ENCODE measurements at regions of chr3 and their contacts with region 1.

Region 1: GRCh38 chr3:115147329-115148141 is 447 bp upstream of the ZBTB20 start:
- DNase-seq: peak; percentile 92 to 100 (median 96)
- ATAC-seq: peak; percentile 71
- H3K4me3 ChIP-seq: peak overlapping the region; percentile 80 to 85
- H3K4me3 Mint-ChIP-seq: peak overlapping the region; percentile 88
- H3K27ac ChIP-seq: peak overlapping the region; percentile 96 to 97
- H3K27ac Mint-ChIP-seq: peak overlapping the region; percentile 100
- H3K4me1 ChIP-seq: peaks cover 15% of the 10 kb centered on the region
- H3K4me1 Mint-ChIP-seq: peaks cover 39% of the 10 kb centered on the region
- H3K27me3 ChIP-seq: no peaks in the 10 kb centered on the region
- H3K27me3 Mint-ChIP-seq: no peaks in the 10 kb centered on the region
- CTCF ChIP-seq: no peak

Region 2: DNA sequence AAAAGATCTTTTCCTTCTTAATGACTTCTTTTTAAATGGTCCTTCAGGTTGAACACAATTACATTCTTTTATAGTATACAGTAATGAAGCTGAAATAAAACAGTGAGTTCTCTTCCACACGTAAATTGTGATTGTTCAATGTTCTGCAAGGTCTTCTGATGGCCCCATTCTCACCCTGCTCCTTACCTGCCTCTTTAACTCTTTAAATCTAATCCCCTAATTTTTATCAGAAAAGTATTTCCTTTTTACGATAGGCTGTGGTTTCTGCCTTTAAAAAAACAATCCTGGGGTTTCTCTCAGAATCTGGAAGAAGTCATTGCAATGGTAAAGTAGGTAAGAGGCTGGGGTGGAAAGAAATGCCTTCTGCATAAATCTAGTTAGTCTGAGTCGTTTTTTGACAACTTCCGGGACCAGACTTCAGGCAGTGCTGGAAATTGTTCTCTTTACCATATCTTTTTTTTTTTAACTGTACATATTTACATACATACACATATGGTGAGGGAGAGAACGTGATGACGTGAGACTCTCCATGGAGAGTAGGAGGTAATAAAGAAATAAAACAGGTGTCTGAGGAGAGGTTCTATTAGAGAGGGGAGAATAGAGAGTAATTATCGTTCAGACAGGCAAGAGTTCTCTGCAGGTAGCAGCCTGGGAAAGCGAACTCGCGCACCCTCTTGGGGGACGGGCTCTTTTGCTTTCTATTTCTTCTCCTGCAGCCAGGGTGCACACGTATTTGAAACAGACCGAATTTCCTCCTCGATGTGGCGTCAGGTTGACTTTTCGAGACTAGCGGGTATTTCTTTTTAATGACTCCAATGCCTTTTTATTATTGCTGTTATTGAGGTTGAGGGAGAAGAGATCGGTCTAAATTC is 1615.5 kb before region 1 on chr3 and contains the start of gene SIDT1:
- CTCF ChIA-PET with region 1: no interaction called
- POLR2A ChIA-PET with region 1: interaction called, 3 read pairs
- intact Hi-C with region 1: loop called in 1 of 2 experiments (anchors 10 kb)
- DNase-seq: peak; percentile 50 to 90 (median 73)
- ATAC-seq: peak; percentile 77
- H3K4me3 ChIP-seq: peak within 1 kb of the TSS; percentile 83 to 93
- H3K4me3 Mint-ChIP-seq: peak within 1 kb of the TSS; percentile 96
- H3K27ac ChIP-seq: peak within 1 kb of the TSS; percentile 87 to 93
- H3K27ac Mint-ChIP-seq: peak within 1 kb of the TSS; percentile 97
- H3K4me1 ChIP-seq: peaks cover 43% of the 10 kb centered on the region
- H3K4me1 Mint-ChIP-seq: peaks cover 52% of the 10 kb centered on the region
- H3K27me3 ChIP-seq: no peaks in the 10 kb centered on the region
- H3K27me3 Mint-ChIP-seq: no peaks in the 10 kb centered on the region
- CTCF ChIP-seq: no peak
- total RNA-seq, gene SIDT1: 32.1 to 38.3 TPM

Region 3: DNA sequence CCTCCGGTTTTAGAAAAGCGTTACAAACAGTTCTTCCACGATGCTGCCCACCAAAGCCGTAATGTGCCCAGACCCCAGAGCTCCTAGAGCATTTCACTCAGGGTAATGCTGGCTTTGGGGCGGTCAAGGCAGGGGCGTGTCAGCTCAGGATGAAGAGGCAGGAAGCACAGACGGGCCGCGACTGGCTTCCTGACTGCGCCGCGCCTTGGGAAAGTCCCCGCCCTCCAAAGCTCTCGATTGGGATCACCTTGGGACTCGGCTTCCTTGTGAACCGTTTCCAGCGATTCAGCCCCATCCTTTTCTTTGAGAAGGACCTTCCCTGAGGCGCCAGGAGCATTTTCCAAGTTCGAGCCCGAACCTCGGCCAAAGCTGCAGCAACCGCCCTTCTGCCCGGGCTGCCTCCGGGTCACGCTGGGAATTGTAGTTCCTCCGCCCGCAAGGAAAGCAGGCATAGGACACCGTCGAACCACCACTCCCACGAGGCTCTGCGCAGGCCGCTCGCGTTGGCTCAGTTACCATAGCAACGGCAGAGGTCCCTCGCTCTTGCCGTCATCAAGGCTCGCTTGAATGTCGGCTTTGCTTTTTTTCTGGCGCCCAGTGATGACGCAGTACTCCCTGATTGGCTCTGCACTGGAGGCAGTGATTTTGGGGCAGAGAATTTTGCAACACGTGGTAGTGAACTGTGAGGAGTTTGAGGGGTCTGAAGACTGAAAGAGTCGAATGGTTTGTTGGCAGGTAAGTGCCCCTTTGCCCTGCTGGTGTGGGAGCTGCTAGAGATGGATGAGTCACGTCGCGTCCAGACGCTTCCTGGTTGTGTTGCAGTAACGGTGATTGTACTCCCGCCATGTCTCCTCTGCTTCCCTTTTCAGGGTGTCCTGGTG is 1091.2 kb before region 1 on chr3 and contains the starts of genes CCDC191 and QTRT2:
- CTCF ChIA-PET with region 1: no interaction called
- POLR2A ChIA-PET with region 1: no interaction called
- intact Hi-C with region 1: loop called in 1 of 2 experiments (anchors 5 kb)
- DNase-seq: peak; percentile 94 to 100 (median 98)
- ATAC-seq: peak; percentile 95
- H3K4me3 ChIP-seq: peak within 1 kb of the TSS; percentile 70 to 96
- H3K4me3 Mint-ChIP-seq: peak within 1 kb of the TSS; percentile 94
- H3K27ac ChIP-seq: peak within 1 kb of the TSS; percentile 84 to 97
- H3K27ac Mint-ChIP-seq: peak within 1 kb of the TSS; percentile 98
- H3K4me1 ChIP-seq: peaks cover 20% of the 10 kb centered on the region
- H3K4me1 Mint-ChIP-seq: peaks cover 53% of the 10 kb centered on the region
- H3K27me3 ChIP-seq: no peaks in the 10 kb centered on the region
- H3K27me3 Mint-ChIP-seq: no peaks in the 10 kb centered on the region
- CTCF ChIP-seq: no peak
- total RNA-seq, gene CCDC191: 2.8 to 2.9 TPM
- total RNA-seq, gene QTRT2: 31.7 to 36.6 TPM

Region 4: DNA sequence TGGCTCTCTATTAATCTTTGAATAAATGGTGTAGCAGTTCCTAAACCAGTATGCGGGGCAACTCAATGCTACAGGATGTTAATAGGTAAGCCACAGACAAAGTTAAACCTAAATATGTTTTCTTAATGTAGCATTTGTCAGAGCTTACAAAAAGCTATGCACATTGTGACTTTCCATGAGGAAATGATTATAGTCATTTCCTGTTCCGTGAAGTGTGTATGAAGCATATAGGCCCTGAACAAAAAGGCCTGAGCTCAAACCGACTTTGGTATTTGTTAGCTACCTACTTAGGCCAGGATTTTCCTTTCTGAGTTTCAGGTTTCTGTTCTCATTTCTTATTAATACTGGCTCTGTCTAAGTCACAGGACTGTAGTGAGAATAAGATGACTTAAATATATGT is 924.4 kb before region 1 on chr3:
- CTCF ChIA-PET with region 1: no interaction called
- POLR2A ChIA-PET with region 1: interaction called, 4 read pairs
- intact Hi-C with region 1: loop called in 1 of 2 experiments (anchors 10 kb)
- DNase-seq: peak in 2 of 9 experiments; percentile 60 to 83
- ATAC-seq: peak; percentile 70
- H3K4me3 ChIP-seq: no peak overlapping the region
- H3K4me3 Mint-ChIP-seq: no peak overlapping the region
- H3K27ac ChIP-seq: peak overlapping the region; percentile 37 to 78
- H3K27ac Mint-ChIP-seq: peak overlapping the region; percentile 89
- H3K4me1 ChIP-seq: peaks cover 79% of the 10 kb centered on the region
- H3K4me1 Mint-ChIP-seq: peaks cover 89% of the 10 kb centered on the region
- H3K27me3 ChIP-seq: no peaks in the 10 kb centered on the region
- H3K27me3 Mint-ChIP-seq: no peaks in the 10 kb centered on the region
- CTCF ChIP-seq: no peak

Region 5: GRCh38 chr3:115099986-115100571 is 47.5 kb before region 1 on chr3:
- CTCF ChIA-PET with region 1: interaction called, 5 read pairs
- POLR2A ChIA-PET with region 1: interaction called, 42 read pairs
- intact Hi-C with region 1: loop called (anchors 1 to 2 kb)
- DNase-seq: peak in 6 of 9 experiments; percentile 20 to 81 (median 49)
- ATAC-seq: peak; percentile 84
- H3K4me3 ChIP-seq: peak overlapping the region; percentile 40 to 42
- H3K4me3 Mint-ChIP-seq: peak overlapping the region; percentile 83
- H3K27ac ChIP-seq: peak overlapping the region; percentile 7 to 56
- H3K27ac Mint-ChIP-seq: peak overlapping the region; percentile 91
- H3K4me1 ChIP-seq: peaks cover 18% of the 10 kb centered on the region
- H3K4me1 Mint-ChIP-seq: peaks cover 58% of the 10 kb centered on the region
- H3K27me3 ChIP-seq: no peaks in the 10 kb centered on the region
- H3K27me3 Mint-ChIP-seq: no peaks in the 10 kb centered on the region
- CTCF ChIP-seq: no peak

Region 6: DNA sequence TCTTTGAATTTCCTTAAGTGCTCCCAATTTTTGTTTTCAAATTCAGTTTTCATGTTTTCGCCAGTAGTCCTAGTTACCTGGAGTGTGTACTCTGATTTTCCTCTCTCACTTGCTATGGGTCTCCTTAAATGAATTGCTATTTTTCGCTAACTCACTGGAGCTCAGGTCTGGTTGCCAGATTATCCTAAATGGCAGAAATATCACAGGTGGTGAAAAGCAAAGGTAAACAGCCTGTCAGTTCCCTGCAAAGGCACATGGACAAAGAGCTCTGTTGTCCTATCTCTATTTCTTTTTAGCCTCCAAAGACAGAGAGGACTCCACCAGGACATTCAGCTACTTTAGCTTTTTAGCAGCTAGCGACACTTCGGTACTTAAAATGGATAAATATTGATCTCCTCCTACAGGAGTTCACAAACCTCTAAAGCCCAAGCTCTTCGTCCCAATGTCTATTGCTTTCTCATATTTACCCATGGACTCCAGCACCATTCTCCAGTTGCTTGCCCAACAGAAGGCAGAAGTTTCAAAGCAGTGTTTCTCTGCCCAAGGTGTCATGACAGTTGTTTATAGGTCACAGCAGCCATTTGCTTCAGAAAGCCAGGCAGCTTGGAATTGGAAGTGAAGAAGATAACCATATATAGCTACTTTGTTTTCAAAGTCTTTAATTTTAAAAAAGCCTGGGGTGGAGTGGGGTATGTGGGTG is 12.7 kb before region 1 on chr3:
- CTCF ChIA-PET with region 1: interaction called, 4 read pairs
- POLR2A ChIA-PET with region 1: interaction called, 16 read pairs
- intact Hi-C with region 1: no loop called
- DNase-seq: no peak
- ATAC-seq: no peak
- H3K4me3 ChIP-seq: no peak overlapping the region
- H3K4me3 Mint-ChIP-seq: no peak overlapping the region
- H3K27ac ChIP-seq: no peak overlapping the region
- H3K27ac Mint-ChIP-seq: no peak overlapping the region
- H3K4me1 ChIP-seq: no peaks in the 10 kb centered on the region
- H3K4me1 Mint-ChIP-seq: peaks cover 13% of the 10 kb centered on the region
- H3K27me3 ChIP-seq: no peaks in the 10 kb centered on the region
- H3K27me3 Mint-ChIP-seq: no peaks in the 10 kb centered on the region
- CTCF ChIP-seq: no peak

Region 7: DNA sequence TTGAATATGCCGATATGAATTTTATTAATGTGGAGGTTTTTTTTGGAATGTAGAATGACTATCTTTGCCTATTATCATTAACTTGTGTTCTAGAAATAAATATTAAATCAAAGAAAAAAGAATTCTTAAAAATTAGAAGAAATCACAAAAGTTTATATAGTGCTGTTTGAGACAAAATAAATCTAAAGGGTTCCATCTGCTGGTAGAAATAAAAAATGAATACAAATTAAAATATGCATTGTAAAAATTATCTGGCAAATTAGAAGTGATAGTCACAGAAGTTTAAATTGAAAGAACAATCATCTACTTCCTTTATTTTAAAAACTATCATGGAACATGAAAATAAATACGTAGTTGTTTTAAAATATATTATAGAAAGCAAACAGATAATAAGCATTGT is 22.3 kb after region 1 on chr3:
- CTCF ChIA-PET with region 1: interaction called, 15 read pairs
- POLR2A ChIA-PET with region 1: interaction called, 62 read pairs
- intact Hi-C with region 1: loop called in 1 of 2 experiments (anchors 1 kb)
- DNase-seq: peak in 1 of 9 experiments; percentile 32
- ATAC-seq: no peak
- H3K4me3 ChIP-seq: no peak overlapping the region
- H3K4me3 Mint-ChIP-seq: no peak overlapping the region
- H3K27ac ChIP-seq: no peak overlapping the region
- H3K27ac Mint-ChIP-seq: no peak overlapping the region
- H3K4me1 ChIP-seq: peaks cover 11% of the 10 kb centered on the region
- H3K4me1 Mint-ChIP-seq: peaks cover 12% of the 10 kb centered on the region
- H3K27me3 ChIP-seq: no peaks in the 10 kb centered on the region
- H3K27me3 Mint-ChIP-seq: no peaks in the 10 kb centered on the region
- CTCF ChIP-seq: peak; percentile 59

Measured in CD8-positive, alpha-beta T cell (primary cell).